Tibial artery (tissue), 4 donors: ENCODE measurements at regions of chr11 and their contacts with region 1.

Region 1: DNA sequence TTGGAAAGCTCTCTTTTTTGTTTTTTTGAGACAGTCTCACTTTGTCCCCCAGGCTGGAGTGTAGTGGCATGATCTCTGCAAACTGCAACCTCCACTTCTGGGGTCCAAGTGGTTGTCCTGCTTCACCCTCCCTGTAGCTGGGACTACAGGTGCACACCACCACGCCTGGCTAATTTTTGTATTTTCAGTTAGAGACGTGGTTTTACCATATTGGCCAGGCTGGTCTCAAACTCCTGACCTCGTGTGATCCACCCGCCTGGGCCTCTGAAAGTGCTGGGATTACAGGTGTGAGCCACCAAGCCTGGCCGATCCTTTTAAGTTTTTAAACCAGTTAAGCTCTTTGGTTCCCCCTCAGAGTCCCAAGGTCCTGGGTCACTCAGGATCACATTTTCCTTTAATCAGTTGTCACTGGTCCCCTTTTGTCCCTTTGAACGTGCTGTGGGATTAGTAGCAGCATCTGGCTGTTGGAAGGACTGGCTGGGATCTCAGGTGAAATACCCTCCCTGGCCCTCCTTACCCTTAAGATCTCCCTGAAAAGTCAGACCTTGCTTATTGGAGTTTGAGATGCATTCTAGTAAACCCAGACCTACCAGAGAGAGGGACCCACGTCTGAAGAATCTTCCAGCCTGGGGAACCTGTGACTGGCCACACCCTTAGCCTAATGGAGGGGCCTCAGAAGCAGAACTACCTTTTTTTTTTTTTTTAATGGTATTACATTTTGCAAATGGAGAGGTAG is 8.1 kb downstream of the MALAT1 start:
- DNase-seq: peak; percentile 64 to 78
- H3K4me3 ChIP-seq: peak overlapping the region; percentile 74 to 86
- H3K27ac ChIP-seq: peak overlapping the region; percentile 99
- H3K4me1 ChIP-seq: peaks cover 0 to 47% (median 14%) of the 10 kb centered on the region in 4 donors
- H3K27me3 ChIP-seq: no peaks in the 10 kb centered on the region
- CTCF ChIP-seq: peak in 1 of 2 experiments; percentile 5

Region 2: GRCh38 chr11:65366340-65366773 is 140.6 kb before region 1 on chr11:
- intact Hi-C with region 1: loop called (anchors 2 kb)
- DNase-seq: no peak
- H3K4me3 ChIP-seq: no peak overlapping the region
- H3K27ac ChIP-seq: no peak overlapping the region
- H3K4me1 ChIP-seq: peaks cover 0 to 19% (median 7%) of the 10 kb centered on the region in 4 donors
- H3K27me3 ChIP-seq: no peaks in the 10 kb centered on the region
- CTCF ChIP-seq: peak; percentile 71 to 87

Region 3: GRCh38 chr11:65471410-65471762 is 35.6 kb before region 1 on chr11:
- intact Hi-C with region 1: loop called (anchors 5 kb)
- DNase-seq: peak; percentile 84 to 96
- H3K4me3 ChIP-seq: peak overlapping the region; percentile 28 to 48
- H3K27ac ChIP-seq: peak overlapping the region; percentile 95 to 100
- H3K4me1 ChIP-seq: peaks cover 0 to 68% (median 35%) of the 10 kb centered on the region in 4 donors
- H3K27me3 ChIP-seq: no peaks in the 10 kb centered on the region
- CTCF ChIP-seq: peak; percentile 62 to 67

Region 4: DNA sequence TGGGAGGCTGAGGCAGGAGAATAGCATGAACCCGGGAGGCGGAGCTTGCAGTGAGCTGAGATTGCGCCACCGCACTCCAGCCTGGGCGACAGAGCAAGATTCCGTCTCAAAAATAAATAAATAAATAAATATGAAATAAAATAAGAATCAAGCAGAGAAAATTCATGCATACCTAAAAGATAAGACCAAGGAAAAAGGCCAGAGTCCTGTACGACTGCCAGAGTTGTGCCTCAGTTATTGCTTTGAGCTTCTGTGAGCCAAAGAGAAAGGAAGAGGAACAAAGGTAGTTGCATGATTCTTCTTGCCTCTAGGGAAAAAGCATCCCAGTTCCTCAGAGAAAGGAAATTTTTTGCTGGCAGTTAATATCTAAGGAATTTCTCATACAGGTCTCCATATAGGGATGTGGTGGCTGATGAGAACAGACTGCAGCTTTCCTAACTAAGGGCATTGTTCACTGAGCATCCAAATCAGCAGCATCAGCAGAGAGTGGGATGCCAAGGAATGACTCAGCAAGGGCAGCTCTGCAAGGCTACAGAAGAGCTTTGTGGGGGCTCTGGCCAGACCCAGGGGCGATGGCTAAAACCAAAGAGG is 25.5 kb before region 1 on chr11:
- intact Hi-C with region 1: no loop called
- DNase-seq: peak; percentile 73 to 86
- H3K4me3 ChIP-seq: no peak overlapping the region
- H3K27ac ChIP-seq: peak overlapping the region; percentile 97 to 99
- H3K4me1 ChIP-seq: peaks cover 0 to 82% (median 50%) of the 10 kb centered on the region in 4 donors
- H3K27me3 ChIP-seq: no peaks in the 10 kb centered on the region
- CTCF ChIP-seq: no peak

Region 5: GRCh38 chr11:65540297-65541092 is 33.6 kb after region 1 on chr11:
- intact Hi-C with region 1: no loop called
- DNase-seq: peak; percentile 88 to 96
- H3K4me3 ChIP-seq: peak overlapping the region; percentile 50 to 58
- H3K27ac ChIP-seq: peak overlapping the region; percentile 86 to 91
- H3K4me1 ChIP-seq: peaks cover 0 to 31% (median 23%) of the 10 kb centered on the region in 4 donors
- H3K27me3 ChIP-seq: no peaks in the 10 kb centered on the region
- CTCF ChIP-seq: peak; percentile 87 to 96

Region 6: GRCh38 chr11:65551572-65552398 is 44.8 kb after region 1 on chr11:
- intact Hi-C with region 1: no loop called
- DNase-seq: no peak
- H3K4me3 ChIP-seq: no peak overlapping the region
- H3K27ac ChIP-seq: no peak overlapping the region
- H3K4me1 ChIP-seq: peaks cover 0 to 36% (median 33%) of the 10 kb centered on the region in 4 donors
- H3K27me3 ChIP-seq: no peaks in the 10 kb centered on the region
- CTCF ChIP-seq: peak; percentile 23 to 41

Region 7: GRCh38 chr11:66258473-66258893 is 751.5 kb after region 1 on chr11:
- intact Hi-C with region 1: no loop called
- DNase-seq: no peak
- H3K4me3 ChIP-seq: peak overlapping the region; percentile 91 to 99
- H3K27ac ChIP-seq: peak overlapping the region; percentile 78 to 91
- H3K4me1 ChIP-seq: peaks cover 0 to 23% (median 10%) of the 10 kb centered on the region in 4 donors
- H3K27me3 ChIP-seq: no peaks in the 10 kb centered on the region
- CTCF ChIP-seq: no peak